Naive thymus-derived CD8-positive, alpha-beta T cell (primary cell): ENCODE measurements at regions of chr2 and their contacts with region 1.

Region 1: GRCh38 chr2:241315093-241315878 is at the start of gene HDLBP:
- DNase-seq: peak; percentile 99 to 100 (median 100)
- ATAC-seq: peak; percentile 73 to 75
- H3K4me3 Mint-ChIP-seq: peak within 1 kb of the TSS; percentile 92 to 100 (median 98)
- H3K27ac Mint-ChIP-seq: peak within 1 kb of the TSS; percentile 93 to 100 (median 99)
- H3K4me1 Mint-ChIP-seq: peaks cover 39 to 79% (median 75%) of the 10 kb centered on the region in 4 donors
- H3K27me3 Mint-ChIP-seq: peaks cover 0 to 2% (median 0%) of the 10 kb centered on the region in 5 donors
- polyA plus RNA-seq, gene HDLBP: 32.2 to 71.1 (median 45.7) TPM

Region 2: DNA sequence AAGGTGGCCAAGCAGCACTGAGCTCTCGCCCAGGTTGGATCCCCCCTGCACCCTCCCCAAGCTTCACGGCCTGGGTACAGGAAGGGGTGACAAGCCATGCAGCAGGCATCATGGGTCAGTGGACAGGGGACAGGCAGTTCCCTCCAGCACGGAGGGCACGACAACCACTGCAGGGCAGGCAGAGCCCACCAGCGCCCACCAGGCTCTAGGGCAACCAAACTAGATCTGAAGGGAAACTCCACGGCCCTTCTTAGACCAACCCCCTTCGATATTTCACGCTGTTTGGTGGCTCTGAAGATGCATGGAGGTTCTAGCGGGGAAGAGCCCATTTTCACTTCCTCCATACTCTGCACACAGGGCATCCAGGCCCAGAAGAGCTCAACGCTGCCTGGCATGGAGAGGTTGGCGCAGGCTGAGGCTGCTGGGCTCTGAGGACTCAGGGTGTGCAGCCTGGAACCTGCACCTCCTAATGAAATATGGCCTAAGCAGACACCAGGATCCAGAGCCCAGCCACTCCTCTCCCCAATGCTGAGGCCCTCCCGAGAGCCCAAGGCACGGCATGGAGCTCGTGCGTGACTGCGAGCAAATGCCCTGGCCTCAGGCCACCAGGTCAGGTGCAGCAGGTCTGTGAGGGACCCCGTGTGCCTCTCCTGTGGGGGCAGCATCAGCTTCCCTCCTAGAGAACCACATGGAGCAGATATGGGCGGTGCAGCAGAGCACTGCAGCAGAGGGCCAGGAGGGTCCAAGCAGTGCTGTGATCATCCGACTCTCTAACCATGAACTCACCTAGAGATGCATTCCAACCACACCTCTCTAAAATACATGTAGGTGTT is 204.5 kb before region 1 on chr2:
- POLR2A ChIA-PET with region 1: interaction called, 26 read pairs
- DNase-seq: peak in 1 of 10 donors; percentile 30
- ATAC-seq: peak; percentile 19 to 28
- H3K4me3 Mint-ChIP-seq: peak overlapping the region; percentile 85 to 99 (median 94)
- H3K27ac Mint-ChIP-seq: peak overlapping the region; percentile 92 to 99 (median 98)
- H3K4me1 Mint-ChIP-seq: peaks cover 25 to 64% (median 58%) of the 10 kb centered on the region in 4 donors
- H3K27me3 Mint-ChIP-seq: no peaks in the 10 kb centered on the region

Region 3: DNA sequence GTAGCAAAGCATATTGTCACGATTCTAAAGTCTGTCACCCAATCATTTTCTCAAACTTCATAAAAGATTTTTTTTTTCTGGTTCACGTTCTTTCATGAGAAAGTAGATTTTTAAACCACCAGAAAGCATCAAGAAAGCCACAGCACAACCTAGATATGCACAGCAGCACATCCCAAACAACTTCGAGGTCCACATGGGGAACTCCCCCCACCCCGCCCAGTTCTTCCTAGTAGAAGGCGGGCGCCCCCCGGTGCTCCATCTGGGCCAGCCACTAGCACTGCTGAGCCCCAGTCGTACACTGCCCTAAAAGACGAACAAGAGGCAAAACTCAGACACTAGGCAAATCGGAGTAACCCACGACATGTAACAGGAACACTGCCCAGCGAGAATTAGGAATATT is 15.3 kb before region 1 on chr2:
- POLR2A ChIA-PET with region 1: interaction called, 31 read pairs
- DNase-seq: peak; percentile 23 to 84 (median 64)
- ATAC-seq: peak; percentile 92 to 95
- H3K4me3 Mint-ChIP-seq: peak overlapping the region; percentile 38 to 80 (median 56)
- H3K27ac Mint-ChIP-seq: peak overlapping the region; percentile 12 to 94 (median 58)
- H3K4me1 Mint-ChIP-seq: peaks cover 37 to 75% (median 69%) of the 10 kb centered on the region in 4 donors
- H3K27me3 Mint-ChIP-seq: no peaks in the 10 kb centered on the region

Region 4: GRCh38 chr2:241649404-241649803 is 334.1 kb after region 1 on chr2:
- POLR2A ChIA-PET with region 1: no interaction called
- DNase-seq: no peak
- ATAC-seq: no peak
- H3K4me3 Mint-ChIP-seq: no peak overlapping the region
- H3K27ac Mint-ChIP-seq: peak overlapping the region in 1 of 10 donors; percentile 78
- H3K4me1 Mint-ChIP-seq: peaks cover 6 to 36% (median 24%) of the 10 kb centered on the region in 4 donors
- H3K27me3 Mint-ChIP-seq: no peaks in the 10 kb centered on the region